ENCODE measurements at regions of chr4 and their contacts with region 1.

Region 1: DNA sequence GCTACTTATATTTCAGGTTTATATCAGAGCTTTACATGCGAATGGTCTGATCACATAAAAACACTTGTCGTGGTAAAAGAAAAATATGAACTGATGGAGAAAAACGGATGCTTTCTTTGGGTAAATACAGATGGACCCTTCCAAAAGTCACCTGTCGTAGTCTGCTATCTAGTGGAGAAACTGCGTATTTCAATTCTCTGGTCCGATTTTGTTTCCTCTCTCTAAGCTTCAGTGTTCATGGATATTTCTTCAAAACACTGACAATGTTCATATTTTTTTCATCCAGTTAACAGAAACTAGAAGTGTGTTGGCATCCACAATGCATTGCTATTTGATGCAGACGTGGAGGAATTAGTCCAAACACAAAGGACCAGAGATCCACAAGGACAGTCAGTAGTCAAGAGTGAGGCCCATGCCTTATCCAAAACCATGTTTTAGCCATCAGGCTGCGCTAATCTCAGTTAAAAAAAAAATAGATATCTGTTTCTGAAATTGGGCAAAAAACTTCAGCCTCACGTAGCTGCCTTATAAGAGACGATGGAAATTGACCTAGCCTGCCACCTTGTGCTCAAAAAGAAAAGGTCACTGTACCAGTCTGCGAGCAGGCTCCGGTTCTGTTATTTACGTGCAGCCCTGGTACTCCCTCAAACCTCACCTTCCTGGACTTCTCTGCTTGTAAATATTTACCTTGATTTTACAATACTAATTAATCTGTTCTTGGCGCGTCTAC is 16.0 kb downstream of the MEPE start:
- DNase-seq: peak in 1 of 2 donors; percentile 18
- ATAC-seq: peak; percentile 75 to 80
- H3K4me3 ChIP-seq: peak overlapping the region in 3 of 4 donors; percentile 4 to 30 (median 28)
- H3K27ac ChIP-seq: peak overlapping the region in 3 of 4 donors; percentile 15 to 36 (median 34)
- H3K4me1 ChIP-seq: peaks cover 7 to 8% of the 10 kb centered on the region in 2 donors
- H3K27me3 ChIP-seq: no peaks in the 10 kb centered on the region
- CTCF ChIP-seq: peak; percentile 23 to 62 (median 48)
- POLR2A ChIP-seq: no peak

Region 2: GRCh38 chr4:87281603-87282002 is 567.2 kb before region 1 on chr4:
- in situ Hi-C with region 1: no loop called
- intact Hi-C with region 1: no loop called
- DNase-seq: no peak
- ATAC-seq: no peak
- H3K4me3 ChIP-seq: no peak overlapping the region
- H3K27ac ChIP-seq: no peak overlapping the region
- H3K4me1 ChIP-seq: no peaks in the 10 kb centered on the region
- H3K27me3 ChIP-seq: no peaks in the 10 kb centered on the region
- CTCF ChIP-seq: no peak
- POLR2A ChIP-seq: no peak

Region 3: GRCh38 chr4:87353592-87353991 is 495.2 kb before region 1 on chr4:
- in situ Hi-C with region 1: loop called in 1 of 4 experiments (anchors 25 kb)
- intact Hi-C with region 1: loop called (anchors 10 kb)
- DNase-seq: peak in 1 of 2 donors; percentile 38
- ATAC-seq: peak; percentile 42 to 94
- H3K4me3 ChIP-seq: no peak overlapping the region
- H3K27ac ChIP-seq: peak overlapping the region; percentile 6 to 50 (median 32)
- H3K4me1 ChIP-seq: peaks cover 0 to 4% of the 10 kb centered on the region in 2 donors
- H3K27me3 ChIP-seq: no peaks in the 10 kb centered on the region
- CTCF ChIP-seq: peak; percentile 42 to 59 (median 56)
- POLR2A ChIP-seq: no peak

Region 4: GRCh38 chr4:87390891-87391575 is 457.8 kb before region 1 on chr4 and contains the start of gene HSD17B11:
- in situ Hi-C with region 1: loop called in 2 of 4 experiments (anchors 25 kb)
- intact Hi-C with region 1: no loop called
- DNase-seq: peak; percentile 81 to 82
- ATAC-seq: peak; percentile 95 to 99
- H3K4me3 ChIP-seq: peak within 1 kb of the TSS; percentile 55 to 71 (median 63)
- H3K27ac ChIP-seq: peak within 1 kb of the TSS; percentile 65 to 79 (median 78)
- H3K4me1 ChIP-seq: peaks cover 0 to 5% of the 10 kb centered on the region in 2 donors
- H3K27me3 ChIP-seq: no peaks in the 10 kb centered on the region
- CTCF ChIP-seq: peak in 1 of 5 experiments; percentile 30
- POLR2A ChIP-seq: peak; percentile 50 to 81
- total RNA-seq, gene HSD17B11: 15.3 to 34.9 (median 19.2) TPM

Region 5: GRCh38 chr4:87543835-87544461 is 304.8 kb before region 1 on chr4:
- in situ Hi-C with region 1: loop called in 2 of 4 experiments (anchors 10 kb)
- intact Hi-C with region 1: loop called (anchors 5 kb)
- DNase-seq: no peak
- ATAC-seq: peak; percentile 39 to 55
- H3K4me3 ChIP-seq: no peak overlapping the region
- H3K27ac ChIP-seq: peak overlapping the region in 1 of 4 donors; percentile 52
- H3K4me1 ChIP-seq: peaks cover 4 to 8% of the 10 kb centered on the region in 2 donors
- H3K27me3 ChIP-seq: no peaks in the 10 kb centered on the region
- CTCF ChIP-seq: peak in 4 of 5 experiments; percentile 14 to 57 (median 36)
- POLR2A ChIP-seq: no peak

Region 6: DNA sequence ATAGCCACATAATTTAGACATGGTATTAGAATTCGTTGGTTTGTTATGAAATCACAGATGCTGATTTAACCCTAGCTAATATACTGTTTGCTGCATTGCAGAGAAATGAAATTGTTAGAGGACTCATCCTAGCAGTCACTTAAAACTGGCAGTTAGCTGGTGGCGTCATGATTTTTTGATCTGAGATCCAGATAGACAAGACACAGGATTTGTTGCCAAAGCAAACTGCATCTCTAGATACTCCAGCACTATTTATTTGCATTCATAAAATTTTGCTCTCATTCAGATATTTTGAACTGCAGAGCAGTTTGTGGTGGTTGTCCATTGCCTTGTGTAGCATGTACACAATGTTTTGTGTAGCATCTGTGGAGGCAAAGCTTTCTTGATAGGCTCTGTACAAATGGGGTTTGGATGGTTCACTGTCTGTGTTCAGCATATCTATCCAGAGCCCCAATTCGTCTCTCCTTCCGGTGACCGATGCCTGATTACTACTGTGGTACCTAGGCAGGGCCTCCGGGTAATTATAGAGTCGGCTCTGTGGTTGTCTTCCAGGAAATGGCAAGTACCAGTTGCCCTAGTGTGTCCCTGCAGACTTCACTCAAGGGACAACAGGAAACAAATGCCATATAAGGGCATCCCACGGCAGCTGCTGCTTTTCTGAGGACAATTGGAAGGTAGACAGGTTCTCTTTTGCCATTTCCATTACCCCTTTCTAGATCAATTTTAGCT is 289.5 kb before region 1 on chr4:
- in situ Hi-C with region 1: loop called in 1 of 4 experiments (anchors 25 kb)
- intact Hi-C with region 1: no loop called
- DNase-seq: peak in 1 of 2 donors; percentile 22
- ATAC-seq: peak in 1 of 2 donors; percentile 61
- H3K4me3 ChIP-seq: no peak overlapping the region
- H3K27ac ChIP-seq: no peak overlapping the region
- H3K4me1 ChIP-seq: no peaks in the 10 kb centered on the region
- H3K27me3 ChIP-seq: no peaks in the 10 kb centered on the region
- CTCF ChIP-seq: no peak
- POLR2A ChIP-seq: no peak

Region 7: DNA sequence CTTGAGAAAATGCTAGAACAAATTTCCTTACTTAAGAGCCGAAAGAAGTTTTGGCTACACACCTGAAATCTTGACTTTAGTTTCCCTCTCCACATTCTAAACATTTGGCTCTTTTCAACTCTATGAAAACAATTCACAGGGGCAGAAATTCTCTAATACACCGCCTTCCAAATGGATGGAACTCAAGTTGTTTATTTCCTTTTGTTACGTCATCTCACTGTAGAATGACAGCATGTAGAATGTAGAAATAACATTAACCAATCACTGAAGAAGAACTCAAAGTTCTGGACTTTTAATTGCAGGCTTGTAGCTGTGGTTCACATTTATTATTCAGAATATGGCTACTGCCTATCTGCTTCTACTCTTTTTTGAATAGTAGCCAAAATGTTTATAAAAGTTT is 196.8 kb before region 1 on chr4:
- in situ Hi-C with region 1: no loop called
- intact Hi-C with region 1: no loop called
- DNase-seq: no peak
- ATAC-seq: no peak
- H3K4me3 ChIP-seq: no peak overlapping the region
- H3K27ac ChIP-seq: no peak overlapping the region
- H3K4me1 ChIP-seq: no peaks in the 10 kb centered on the region
- H3K27me3 ChIP-seq: no peaks in the 10 kb centered on the region
- CTCF ChIP-seq: no peak
- POLR2A ChIP-seq: no peak

Region 8: GRCh38 chr4:87679449-87680169 is 169.2 kb before region 1 on chr4:
- in situ Hi-C with region 1: loop called in 3 of 4 experiments (anchors 5 to 10 kb)
- intact Hi-C with region 1: loop called (anchors 2 kb)
- DNase-seq: peak; percentile 31 to 34
- ATAC-seq: peak; percentile 81 to 82
- H3K4me3 ChIP-seq: no peak overlapping the region
- H3K27ac ChIP-seq: peak overlapping the region in 3 of 4 donors; percentile 37 to 52 (median 38)
- H3K4me1 ChIP-seq: peaks cover 0 to 10% of the 10 kb centered on the region in 2 donors
- H3K27me3 ChIP-seq: no peaks in the 10 kb centered on the region
- CTCF ChIP-seq: peak; percentile 21 to 72 (median 57)
- POLR2A ChIP-seq: no peak

Region 9: GRCh38 chr4:87973283-87974169 is 124.7 kb after region 1 on chr4:
- in situ Hi-C with region 1: loop called in 3 of 4 experiments (anchors 5 to 10 kb)
- intact Hi-C with region 1: loop called (anchors 1 kb)
- DNase-seq: no peak
- ATAC-seq: peak; percentile 52 to 65
- H3K4me3 ChIP-seq: peak overlapping the region in 1 of 4 donors; percentile 18
- H3K27ac ChIP-seq: no peak overlapping the region
- H3K4me1 ChIP-seq: peaks cover 0 to 3% of the 10 kb centered on the region in 2 donors
- H3K27me3 ChIP-seq: no peaks in the 10 kb centered on the region
- CTCF ChIP-seq: peak; percentile 28 to 77 (median 56)
- POLR2A ChIP-seq: no peak